HCT116 (cell line): ENCODE measurements at regions of chr2 and their contacts with region 1.

Region 1: GRCh38 chr2:73085691-73086360 is 14.3 kb upstream of the SFXN5 start:
- DNase-seq: no peak
- ATAC-seq: peak; percentile 93
- H3K4me3 ChIP-seq: no peak overlapping the region
- H3K27ac ChIP-seq: no peak overlapping the region
- H3K4me1 ChIP-seq: peaks cover 0 to 14% of the 10 kb centered on the region in 2 experiments; a peak in 2 of 4 replicates
- H3K27me3 ChIP-seq: no peaks in the 10 kb centered on the region
- CTCF ChIP-seq: peak; percentile 91 to 97 (median 97)
- POLR2A ChIP-seq: no peak
- RAD21 ChIP-seq: peak; percentile 95

Region 2: GRCh38 chr2:72993147-72993932 is 92.5 kb before region 1 on chr2:
- CTCF ChIA-PET with region 1: no interaction called
- POLR2A ChIA-PET with region 1: no interaction called
- RAD21 ChIA-PET with region 1: no interaction called
- intact Hi-C with region 1: no loop called
- DNase-seq: peak; percentile 22
- ATAC-seq: peak; percentile 79; the same call in 1 of the 2 replicates
- H3K4me3 ChIP-seq: no peak overlapping the region
- H3K27ac ChIP-seq: no peak overlapping the region
- H3K4me1 ChIP-seq: no peaks in the 10 kb centered on the region
- H3K27me3 ChIP-seq: no peaks in the 10 kb centered on the region
- CTCF ChIP-seq: peak; percentile 65 to 81 (median 66)
- POLR2A ChIP-seq: no peak
- RAD21 ChIP-seq: peak; percentile 74

Region 3: DNA sequence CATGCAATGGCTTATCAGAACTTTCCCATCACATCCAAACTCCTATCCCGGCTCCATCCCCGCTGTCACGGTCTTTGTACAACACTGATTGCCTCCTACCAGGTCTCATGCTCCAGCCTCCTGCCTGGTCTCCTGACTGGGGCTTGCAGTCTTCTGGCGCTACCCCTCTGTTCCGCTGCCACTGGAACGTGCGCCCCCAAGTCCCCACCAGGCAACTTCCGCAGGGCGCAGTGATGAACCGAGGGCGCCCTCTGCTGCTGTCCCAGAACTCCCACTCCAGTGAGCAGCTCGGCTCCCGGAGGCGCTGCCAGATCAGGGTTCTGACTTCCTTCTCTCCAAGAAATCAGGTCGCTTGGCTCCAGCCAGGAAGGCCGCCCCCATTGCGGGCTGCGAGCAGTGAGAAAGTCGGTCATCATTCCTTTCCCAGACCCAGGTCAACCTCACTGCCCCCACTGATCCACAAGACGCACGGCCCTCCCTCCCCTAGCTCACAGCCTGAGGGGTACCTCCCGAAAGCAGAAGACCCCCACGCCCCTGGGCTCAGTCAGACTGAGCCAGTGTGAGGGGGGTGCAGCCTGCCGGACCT is 70.8 kb after region 1 on chr2:
- CTCF ChIA-PET with region 1: interaction called, 33 read pairs
- POLR2A ChIA-PET with region 1: interaction called, 3 read pairs
- RAD21 ChIA-PET with region 1: interaction called in 1 of 2 experiments, 8 read pairs
- intact Hi-C with region 1: loop called (anchors 1 kb)
- DNase-seq: peak; percentile 31
- ATAC-seq: peak; percentile 98
- H3K4me3 ChIP-seq: no peak overlapping the region
- H3K27ac ChIP-seq: no peak overlapping the region
- H3K4me1 ChIP-seq: peaks cover 0 to 5% of the 10 kb centered on the region in 2 experiments; a peak in 1 of 4 replicates
- H3K27me3 ChIP-seq: no peaks in the 10 kb centered on the region
- CTCF ChIP-seq: peak; percentile 80 to 98 (median 83)
- POLR2A ChIP-seq: no peak
- RAD21 ChIP-seq: peak; percentile 99

Region 4: GRCh38 chr2:73163483-73164367 is 77.9 kb after region 1 on chr2:
- CTCF ChIA-PET with region 1: no interaction called
- POLR2A ChIA-PET with region 1: interaction called, 3 read pairs
- RAD21 ChIA-PET with region 1: no interaction called
- intact Hi-C with region 1: loop called (anchors 1 kb)
- DNase-seq: peak; percentile 69
- ATAC-seq: peak; percentile 99
- H3K4me3 ChIP-seq: no peak overlapping the region
- H3K27ac ChIP-seq: no peak overlapping the region
- H3K4me1 ChIP-seq: no peaks in the 10 kb centered on the region; a peak in 2 of 4 replicates
- H3K27me3 ChIP-seq: no peaks in the 10 kb centered on the region
- CTCF ChIP-seq: peak; percentile 83 to 87 (median 87); a peak in 5 of 6 replicates
- POLR2A ChIP-seq: no peak
- RAD21 ChIP-seq: peak; percentile 86

Region 5: GRCh38 chr2:73212448-73213176 is 126.8 kb after region 1 on chr2:
- CTCF ChIA-PET with region 1: interaction called, 6 read pairs
- POLR2A ChIA-PET with region 1: no interaction called
- RAD21 ChIA-PET with region 1: no interaction called
- intact Hi-C with region 1: loop called (anchors 1 kb)
- DNase-seq: no peak
- ATAC-seq: peak; percentile 81
- H3K4me3 ChIP-seq: no peak overlapping the region
- H3K27ac ChIP-seq: no peak overlapping the region
- H3K4me1 ChIP-seq: peaks cover 3 to 34% of the 10 kb centered on the region in 2 experiments; a peak in 3 of 4 replicates
- H3K27me3 ChIP-seq: no peaks in the 10 kb centered on the region
- CTCF ChIP-seq: peak; percentile 78 to 99 (median 95)
- POLR2A ChIP-seq: no peak
- RAD21 ChIP-seq: peak; percentile 78